ENCODE measurements at regions of chr17 and their contacts with region 1.

Region 1: GRCh38 chr17:40531051-40531991 is 29.9 kb upstream of the TNS4 start:
- DNase-seq: no peak
- ATAC-seq: no peak
- H3K4me3 ChIP-seq: no peak overlapping the region
- H3K27ac ChIP-seq: no peak overlapping the region; the same call in 1 of the 2 replicates
- H3K4me1 ChIP-seq: peaks cover 14 to 48% of the 10 kb centered on the region in 2 experiments
- H3K27me3 ChIP-seq: no peaks in the 10 kb centered on the region
- CTCF ChIP-seq: no peak
- POLR2A ChIP-seq: no peak
- RAD21 ChIP-seq: no peak

Region 2: DNA sequence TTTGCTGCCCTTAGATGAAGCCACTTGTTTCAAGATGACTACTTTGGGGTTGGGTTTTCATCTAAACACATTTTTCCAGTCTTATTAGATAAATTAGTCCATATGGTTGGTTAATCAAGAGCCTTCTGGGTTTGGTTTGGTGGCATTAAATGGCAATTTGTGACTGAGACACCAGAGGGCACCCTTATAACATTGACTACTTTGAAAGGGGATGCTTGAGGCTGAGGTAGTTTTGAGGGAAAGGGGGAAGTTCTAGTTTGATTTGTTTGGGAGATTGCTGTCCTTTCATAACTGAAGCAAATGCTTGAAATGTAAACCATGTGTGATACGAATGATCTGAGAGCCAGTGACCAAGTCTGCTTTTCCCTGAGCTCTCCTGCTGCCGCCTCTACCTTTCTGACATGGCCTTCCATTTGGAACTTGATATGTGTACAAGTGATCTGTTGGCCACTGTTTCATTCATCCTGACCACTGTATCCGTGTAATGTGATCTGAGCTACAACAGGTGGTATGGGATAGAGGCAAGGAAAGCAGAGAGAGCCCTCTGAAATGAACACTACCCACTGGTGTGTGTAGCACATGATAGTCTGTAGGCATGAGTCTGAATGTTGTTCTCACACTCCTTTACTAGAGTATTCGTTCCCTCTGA is 228.2 kb before region 1 on chr17:
- CTCF ChIA-PET with region 1: interaction called, 3 read pairs
- POLR2A ChIA-PET with region 1: no interaction called
- RAD21 ChIA-PET with region 1: no interaction called
- intact Hi-C with region 1: loop called (anchors 5 kb)
- DNase-seq: peak; percentile 35
- ATAC-seq: peak; percentile 63
- H3K4me3 ChIP-seq: no peak overlapping the region
- H3K27ac ChIP-seq: no peak overlapping the region
- H3K4me1 ChIP-seq: peaks cover 10 to 21% of the 10 kb centered on the region in 2 experiments; a peak in 3 of 4 replicates
- H3K27me3 ChIP-seq: no peaks in the 10 kb centered on the region
- CTCF ChIP-seq: peak; percentile 62 to 89 (median 70)
- POLR2A ChIP-seq: no peak
- RAD21 ChIP-seq: peak; percentile 92

Region 3: GRCh38 chr17:40399185-40399584 is 132.1 kb before region 1 on chr17:
- CTCF ChIA-PET with region 1: interaction called, 5 read pairs
- POLR2A ChIA-PET with region 1: interaction called, 3 read pairs
- RAD21 ChIA-PET with region 1: interaction called in 1 of 2 experiments, 5 read pairs
- intact Hi-C with region 1: loop called (anchors 1 kb)
- DNase-seq: peak; percentile 32
- ATAC-seq: peak; percentile 86
- H3K4me3 ChIP-seq: no peak overlapping the region
- H3K27ac ChIP-seq: no peak overlapping the region
- H3K4me1 ChIP-seq: no peaks in the 10 kb centered on the region
- H3K27me3 ChIP-seq: no peaks in the 10 kb centered on the region
- CTCF ChIP-seq: peak; percentile 41 to 67 (median 42); a peak in 4 of 6 replicates
- POLR2A ChIP-seq: no peak
- RAD21 ChIP-seq: peak; percentile 49

Region 4: DNA sequence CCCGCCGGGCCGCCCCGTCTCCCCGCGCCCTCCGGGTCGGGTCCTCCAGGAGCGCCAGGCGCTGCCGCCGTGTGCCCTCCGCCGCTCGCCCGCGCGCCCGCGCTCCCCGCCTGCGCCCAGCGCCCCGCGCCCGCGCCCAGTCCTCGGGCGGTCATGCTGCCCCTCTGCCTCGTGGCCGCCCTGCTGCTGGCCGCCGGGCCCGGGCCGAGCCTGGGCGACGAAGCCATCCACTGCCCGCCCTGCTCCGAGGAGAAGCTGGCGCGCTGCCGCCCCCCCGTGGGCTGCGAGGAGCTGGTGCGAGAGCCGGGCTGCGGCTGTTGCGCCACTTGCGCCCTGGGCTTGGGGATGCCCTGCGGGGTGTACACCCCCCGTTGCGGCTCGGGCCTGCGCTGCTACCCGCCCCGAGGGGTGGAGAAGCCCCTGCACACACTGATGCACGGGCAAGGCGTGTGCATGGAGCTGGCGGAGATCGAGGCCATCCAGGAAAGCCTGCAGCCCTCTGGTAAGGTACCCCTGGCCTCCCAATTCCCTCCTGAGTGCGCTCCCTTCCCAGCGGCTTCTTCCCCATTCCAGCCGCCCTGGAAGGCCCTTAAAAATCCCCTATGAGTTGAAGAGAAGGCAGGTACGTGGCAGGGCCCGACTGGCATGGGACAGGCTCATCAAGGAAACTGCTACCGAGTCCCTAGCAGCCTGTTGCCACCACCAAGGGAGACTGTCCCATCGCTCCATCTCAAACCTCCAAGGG is 87.6 kb before region 1 on chr17:
- CTCF ChIA-PET with region 1: interaction called, 28 read pairs
- POLR2A ChIA-PET with region 1: no interaction called
- RAD21 ChIA-PET with region 1: interaction called, 4 to 14 read pairs
- intact Hi-C with region 1: loop called (anchors 1 kb)
- DNase-seq: no peak
- ATAC-seq: 0 out of 2 replicates have a peak, but pooled peaks have one; percentile 26
- H3K4me3 ChIP-seq: no peak overlapping the region
- H3K27ac ChIP-seq: no peak overlapping the region
- H3K4me1 ChIP-seq: no peaks in the 10 kb centered on the region
- H3K27me3 ChIP-seq: no peaks in the 10 kb centered on the region
- CTCF ChIP-seq: no peak
- POLR2A ChIP-seq: no peak
- RAD21 ChIP-seq: no peak

Region 5: GRCh38 chr17:40559954-40560591 is 28.8 kb after region 1 on chr17:
- CTCF ChIA-PET with region 1: interaction called, 22 read pairs
- POLR2A ChIA-PET with region 1: interaction called, 5 read pairs
- RAD21 ChIA-PET with region 1: interaction called, 7 to 14 read pairs
- intact Hi-C with region 1: no loop called
- DNase-seq: peak; percentile 79
- ATAC-seq: peak; percentile 96
- H3K4me3 ChIP-seq: peak overlapping the region; percentile 21; a peak in 2 of 4 replicates
- H3K27ac ChIP-seq: peak overlapping the region; percentile 11; the same call in 1 of the 2 replicates
- H3K4me1 ChIP-seq: peaks cover 10 to 16% of the 10 kb centered on the region in 2 experiments
- H3K27me3 ChIP-seq: no peaks in the 10 kb centered on the region
- CTCF ChIP-seq: peak; percentile 97 to 99 (median 97)
- POLR2A ChIP-seq: no peak
- RAD21 ChIP-seq: peak; percentile 99

Region 6: GRCh38 chr17:40735016-40735415 is 203.7 kb after region 1 on chr17:
- CTCF ChIA-PET with region 1: no interaction called
- POLR2A ChIA-PET with region 1: no interaction called
- RAD21 ChIA-PET with region 1: no interaction called
- intact Hi-C with region 1: no loop called
- DNase-seq: no peak
- ATAC-seq: no peak
- H3K4me3 ChIP-seq: no peak overlapping the region
- H3K27ac ChIP-seq: no peak overlapping the region
- H3K4me1 ChIP-seq: no peaks in the 10 kb centered on the region
- H3K27me3 ChIP-seq: no peaks in the 10 kb centered on the region
- CTCF ChIP-seq: no peak
- POLR2A ChIP-seq: no peak
- RAD21 ChIP-seq: no peak

Region 7: GRCh38 chr17:41635121-41636097 is 1104.1 kb after region 1 on chr17:
- CTCF ChIA-PET with region 1: no interaction called
- POLR2A ChIA-PET with region 1: no interaction called
- RAD21 ChIA-PET with region 1: no interaction called
- intact Hi-C with region 1: no loop called
- DNase-seq: no peak
- ATAC-seq: no peak
- H3K4me3 ChIP-seq: no peak overlapping the region
- H3K27ac ChIP-seq: no peak overlapping the region
- H3K4me1 ChIP-seq: no peaks in the 10 kb centered on the region
- H3K27me3 ChIP-seq: no peaks in the 10 kb centered on the region
- CTCF ChIP-seq: no peak
- POLR2A ChIP-seq: no peak
- RAD21 ChIP-seq: no peak